Activated naive CD4-positive, alpha-beta T cell treated with anti-CD3 and anti-CD28 coated beads for 36 hours (primary cell): ENCODE measurements at regions of chr1 and their contacts with region 1.

Region 1: DNA sequence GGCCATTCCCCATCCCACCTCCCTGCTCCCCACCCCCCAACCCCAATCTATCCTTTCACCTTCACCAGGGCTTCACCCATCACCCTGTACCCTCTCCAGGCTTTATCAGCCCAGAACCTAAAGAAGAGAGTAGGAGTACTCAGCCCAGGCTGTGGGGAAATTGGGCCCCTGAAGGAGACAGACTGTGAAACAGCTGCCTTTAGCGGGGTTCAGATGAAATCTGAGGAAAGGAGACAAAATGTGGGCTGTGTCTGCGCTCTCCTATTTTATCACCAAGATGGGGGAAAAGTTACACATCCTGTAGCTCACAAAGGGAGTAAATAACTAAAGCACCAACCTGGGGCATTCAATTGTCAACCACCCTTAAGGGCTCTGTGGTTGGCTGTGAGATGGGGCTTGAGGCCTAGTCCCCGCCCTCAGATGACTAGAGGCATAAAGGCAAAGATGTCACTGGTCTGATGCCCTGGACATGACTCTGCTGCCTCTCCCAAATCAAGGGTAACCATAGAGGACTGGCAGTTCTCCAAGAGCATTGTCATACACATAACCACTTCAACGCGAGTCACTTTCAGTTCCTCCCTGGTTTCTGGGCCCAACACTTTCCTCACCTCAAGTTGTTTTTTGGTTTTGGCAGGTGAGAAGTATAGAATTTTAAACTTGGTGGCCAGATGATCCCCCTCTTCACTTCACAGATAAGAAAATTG is 30.0 kb downstream of the SLC27A3 start:
- DNase-seq: peak; percentile 88
- H3K4me3 Mint-ChIP-seq: peak overlapping the region; percentile 17
- H3K27ac Mint-ChIP-seq: peak overlapping the region; percentile 90
- H3K4me1 Mint-ChIP-seq: peaks cover 27% of the 10 kb centered on the region
- H3K27me3 Mint-ChIP-seq: no peaks in the 10 kb centered on the region

Region 2: DNA sequence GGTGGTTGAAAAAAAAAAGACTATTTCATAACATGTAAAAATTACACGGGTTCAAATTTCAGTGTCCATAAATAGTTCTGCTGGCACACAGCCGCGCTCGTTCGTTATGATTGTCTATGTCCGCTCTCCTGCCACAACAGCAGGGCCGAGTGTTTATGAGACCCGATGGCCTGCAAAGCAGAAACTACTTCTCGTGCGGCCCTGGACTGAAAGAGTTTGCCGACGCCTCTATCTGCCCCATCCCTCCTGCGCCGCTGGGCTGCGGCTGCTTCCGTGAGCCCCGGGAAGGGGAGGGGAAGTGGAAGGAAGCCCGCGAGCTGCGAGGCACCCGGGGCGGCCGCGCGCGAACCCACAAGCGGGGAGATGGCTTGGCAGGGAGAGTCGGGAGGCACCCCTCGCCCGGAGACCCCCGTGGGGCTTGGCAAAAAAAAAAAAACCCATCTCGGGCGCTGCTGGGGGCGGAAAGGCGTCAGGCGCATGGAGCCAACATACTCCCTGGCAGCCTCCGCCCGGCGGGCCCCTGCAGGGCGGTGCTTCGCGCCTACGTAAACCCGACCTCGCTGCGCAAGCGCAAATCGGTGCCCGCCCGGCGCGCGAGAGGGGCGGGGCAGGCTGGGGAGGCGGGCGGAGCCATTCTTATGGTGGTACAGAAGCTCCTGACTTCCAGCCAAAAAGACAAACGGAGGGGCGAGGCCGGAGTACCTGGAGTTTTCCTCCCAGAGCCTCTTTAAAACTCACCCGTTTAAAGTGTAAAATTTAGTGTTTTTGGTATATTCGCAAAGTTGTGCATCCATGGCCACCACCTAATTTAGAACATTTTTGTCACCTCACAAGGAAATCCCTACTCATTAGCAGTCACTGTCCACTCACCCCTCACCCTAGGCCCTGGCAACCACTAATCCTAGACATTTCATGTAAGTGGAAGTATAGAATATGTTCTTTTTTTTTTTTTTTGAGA is 21.7 kb before region 1 on chr1:
- CTCF ChIA-PET with region 1: no interaction called
- intact Hi-C with region 1: loop called (anchors 2 kb)
- DNase-seq: peak; percentile 93
- H3K4me3 Mint-ChIP-seq: peak overlapping the region; percentile 95
- H3K27ac Mint-ChIP-seq: peak overlapping the region; percentile 92
- H3K4me1 Mint-ChIP-seq: peaks cover 5% of the 10 kb centered on the region
- H3K27me3 Mint-ChIP-seq: no peaks in the 10 kb centered on the region

Region 3: GRCh38 chr1:153888533-153888932 is 83.3 kb after region 1 on chr1:
- CTCF ChIA-PET with region 1: interaction called, 3 read pairs
- intact Hi-C with region 1: loop called (anchors 5 kb)
- DNase-seq: no peak
- H3K4me3 Mint-ChIP-seq: peak overlapping the region; percentile 13
- H3K27ac Mint-ChIP-seq: peak overlapping the region; percentile 53
- H3K4me1 Mint-ChIP-seq: peaks cover 45% of the 10 kb centered on the region
- H3K27me3 Mint-ChIP-seq: no peaks in the 10 kb centered on the region

Region 4: GRCh38 chr1:153958111-153958960 is 153.1 kb after region 1 on chr1 and contains the start of gene CRTC2:
- CTCF ChIA-PET with region 1: no interaction called
- intact Hi-C with region 1: loop called (anchors 1 kb)
- DNase-seq: peak; percentile 99
- H3K4me3 Mint-ChIP-seq: peak within 1 kb of the TSS; percentile 86
- H3K27ac Mint-ChIP-seq: peak within 1 kb of the TSS; percentile 92
- H3K4me1 Mint-ChIP-seq: peaks cover 53% of the 10 kb centered on the region
- H3K27me3 Mint-ChIP-seq: no peaks in the 10 kb centered on the region
- total RNA-seq, gene CRTC2: 72.6 to 83.0 TPM

Region 5: GRCh38 chr1:153967082-153968000 is 162.1 kb after region 1 on chr1 and contains the start of gene CREB3L4:
- CTCF ChIA-PET with region 1: no interaction called
- intact Hi-C with region 1: loop called (anchors 2 kb)
- DNase-seq: peak; percentile 90
- H3K4me3 Mint-ChIP-seq: peak within 1 kb of the TSS; percentile 85
- H3K27ac Mint-ChIP-seq: peak within 1 kb of the TSS; percentile 94
- H3K4me1 Mint-ChIP-seq: peaks cover 42% of the 10 kb centered on the region
- H3K27me3 Mint-ChIP-seq: no peaks in the 10 kb centered on the region
- total RNA-seq, gene CREB3L4: 5.6 to 7.4 TPM